ENCODE measurements at regions of chr1 and their contacts with region 1.

Region 1: GRCh38 chr1:167542109-167543032 is 11.2 kb downstream of the CREG1 start:
- DNase-seq: no peak
- CTCF ChIP-seq: no peak

Region 2: DNA sequence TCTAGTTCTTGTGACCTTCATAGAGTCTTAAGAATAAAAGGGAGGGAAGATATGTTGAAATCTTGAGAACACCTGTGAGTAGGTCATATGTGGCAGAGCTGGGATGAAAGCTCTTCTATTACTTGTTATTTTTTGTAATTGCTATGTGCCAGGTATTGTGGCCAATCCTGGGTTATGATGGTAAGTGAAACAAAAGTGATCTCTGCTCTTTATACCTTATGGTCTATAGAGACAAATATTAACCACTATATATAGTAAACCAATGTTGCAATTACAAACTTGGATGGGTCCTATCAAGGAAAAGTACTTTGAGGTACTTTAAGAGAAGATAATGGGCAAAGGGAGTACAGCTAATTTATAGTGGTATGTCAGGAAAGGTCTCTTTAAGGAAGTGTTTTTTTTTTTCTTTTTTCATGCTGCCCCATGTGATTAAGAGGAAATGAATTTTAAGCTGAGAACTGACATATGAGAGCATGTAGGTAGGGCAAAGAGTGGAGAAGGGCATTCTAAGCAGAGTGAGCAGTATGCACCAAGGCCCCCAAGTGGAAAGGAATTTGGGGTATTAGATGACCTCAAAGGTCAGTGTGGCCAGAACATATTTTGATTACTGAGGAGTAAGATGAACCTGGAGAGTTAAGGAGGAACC is 278.4 kb before region 1 on chr1:
- CTCF ChIA-PET with region 1: interaction called, 20 read pairs
- POLR2A ChIA-PET with region 1: no interaction called
- DNase-seq: no peak
- CTCF ChIP-seq: no peak

Region 3: GRCh38 chr1:167442124-167442848 is 100.1 kb before region 1 on chr1:
- CTCF ChIA-PET with region 1: interaction called, 11 read pairs
- POLR2A ChIA-PET with region 1: interaction called, 3 read pairs
- DNase-seq: peak; percentile 89
- CTCF ChIP-seq: peak; percentile 95

Region 4: DNA sequence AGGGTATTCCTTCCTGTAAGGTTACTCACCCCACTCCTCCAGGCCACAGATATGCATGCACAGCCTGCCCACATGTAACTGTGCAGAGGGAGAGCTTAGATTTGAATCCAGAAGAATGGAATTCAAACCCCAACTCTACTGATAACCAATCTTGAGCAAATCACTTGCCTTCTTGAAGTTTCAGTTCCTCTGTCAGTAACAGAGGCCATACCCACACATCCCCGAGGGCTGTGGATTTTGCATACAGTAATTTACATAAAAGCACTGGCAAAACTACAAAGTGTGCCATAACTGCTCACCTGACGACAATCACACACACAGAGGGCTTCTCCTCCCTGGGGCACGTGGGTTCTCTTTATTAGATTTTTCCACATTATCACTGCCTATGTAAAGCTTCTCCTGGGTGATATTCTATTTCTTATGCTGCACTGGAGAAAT is 42.7 kb before region 1 on chr1:
- CTCF ChIA-PET with region 1: interaction called, 11 read pairs
- POLR2A ChIA-PET with region 1: no interaction called
- DNase-seq: peak; percentile 79
- CTCF ChIP-seq: no peak

Region 5: GRCh38 chr1:167553136-167554027 is 11.0 kb after region 1 on chr1 and contains the start of gene CREG1:
- CTCF ChIA-PET with region 1: interaction called, 87 read pairs
- POLR2A ChIA-PET with region 1: interaction called, 6 read pairs
- DNase-seq: peak; percentile 95
- CTCF ChIP-seq: no peak

Region 6: GRCh38 chr1:167573026-167573425 is 30.7 kb after region 1 on chr1:
- CTCF ChIA-PET with region 1: interaction called, 10 read pairs
- POLR2A ChIA-PET with region 1: no interaction called
- DNase-seq: no peak
- CTCF ChIP-seq: no peak

Measured in GM10248 (cell line).